Activated CD8-positive, alpha-beta T cell treated with anti-CD3 and anti-CD28 coated beads, Interleukin-2, amount 10 ng/mL, durations not matched to agents 7 days and 5 days (primary cell): ENCODE measurements at regions of chr1 and their contacts with region 1.

Region 1: DNA sequence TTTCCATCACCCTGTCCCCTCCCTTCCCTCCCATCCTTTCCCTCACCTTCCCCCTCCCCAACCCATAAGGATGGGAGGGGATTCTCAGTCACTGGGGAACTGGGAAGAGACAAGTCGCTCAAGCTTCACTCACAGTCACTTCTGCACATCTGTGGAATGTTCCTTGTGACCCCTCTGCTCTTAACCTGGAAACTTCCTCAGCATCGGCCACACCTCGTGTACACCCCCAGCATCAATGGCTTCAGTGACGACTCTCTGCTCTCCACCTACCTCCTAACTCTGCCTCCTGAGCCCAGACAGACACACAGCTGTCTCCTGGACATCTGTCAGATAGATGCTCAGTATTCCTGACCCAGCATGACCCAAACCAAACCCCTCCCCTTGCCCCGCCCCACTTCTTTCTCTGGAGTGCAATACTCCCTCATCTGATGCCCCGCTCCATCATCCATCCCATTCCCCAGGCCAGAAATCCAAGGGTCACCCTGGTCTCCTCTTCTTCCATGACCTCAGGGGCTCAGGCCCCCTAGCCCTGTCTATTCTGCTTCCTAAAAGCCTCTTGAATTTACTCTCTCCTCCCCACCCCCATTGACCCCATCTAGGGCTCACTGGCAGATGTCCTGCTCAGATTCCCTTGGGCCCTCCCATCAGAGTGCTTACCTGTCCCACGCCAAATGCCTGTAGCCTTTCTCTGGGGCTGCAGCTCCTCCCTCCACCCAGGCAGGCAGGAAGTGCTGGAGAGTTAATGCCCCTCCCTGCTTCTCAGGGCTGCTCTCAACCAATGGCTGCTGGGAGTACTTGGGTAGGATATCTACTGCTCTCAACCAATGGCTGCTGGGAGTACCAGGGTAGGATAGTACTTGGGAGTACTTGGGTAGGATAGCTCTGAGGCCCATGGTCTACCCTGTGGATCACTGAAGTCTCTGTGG is 83.1 kb upstream of the CSF3R start:
- DNase-seq: no peak
- ATAC-seq: no peak
- H3K4me3 Mint-ChIP-seq: no peak overlapping the region
- H3K27ac Mint-ChIP-seq: no peak overlapping the region
- H3K4me1 Mint-ChIP-seq: no peaks in the 10 kb centered on the region
- H3K27me3 Mint-ChIP-seq: no peaks in the 10 kb centered on the region

Region 2: GRCh38 chr1:36576118-36576517 is 10.3 kb after region 1 on chr1:
- CTCF ChIA-PET with region 1: interaction called, 17 read pairs
- POLR2A ChIA-PET with region 1: no interaction called
- DNase-seq: peak; percentile 63
- ATAC-seq: peak; percentile 73
- H3K4me3 Mint-ChIP-seq: no peak overlapping the region
- H3K27ac Mint-ChIP-seq: no peak overlapping the region
- H3K4me1 Mint-ChIP-seq: no peaks in the 10 kb centered on the region
- H3K27me3 Mint-ChIP-seq: peaks cover 14% of the 10 kb centered on the region